ENCODE measurements at regions of chr12 and their contacts with region 1.

Region 1: DNA sequence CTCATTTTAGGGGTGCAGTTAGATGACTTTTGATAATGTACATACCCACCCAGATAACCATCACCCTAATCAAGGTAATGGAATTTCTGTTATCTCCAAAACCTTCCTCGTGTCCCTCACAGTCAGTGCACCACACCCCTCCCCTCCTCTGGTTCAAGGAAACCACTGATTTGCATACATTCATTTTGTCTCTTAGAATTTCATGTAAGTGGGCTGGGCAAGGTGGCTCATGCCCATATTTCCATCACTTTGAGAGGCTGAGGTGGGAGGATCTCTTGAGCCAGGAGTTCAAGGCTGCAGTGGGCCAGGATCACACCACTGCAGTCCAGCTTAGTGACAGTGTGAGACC is 15.7 kb downstream of the ADIPOR2 start:
- DNase-seq: no peak
- ATAC-seq: no peak
- H3K4me3 Mint-ChIP-seq: no peak overlapping the region
- H3K27ac Mint-ChIP-seq: no peak overlapping the region
- H3K4me1 Mint-ChIP-seq: peaks cover 58% of the 10 kb centered on the region
- H3K27me3 Mint-ChIP-seq: no peaks in the 10 kb centered on the region
- CTCF ChIP-seq: no peak

Region 2: GRCh38 chr12:1740161-1740948 is 33.7 kb after region 1 on chr12:
- CTCF ChIA-PET with region 1: no interaction called
- POLR2A ChIA-PET with region 1: no interaction called
- intact Hi-C with region 1: loop called (anchors 5 kb)
- DNase-seq: no peak
- ATAC-seq: no peak
- H3K4me3 Mint-ChIP-seq: no peak overlapping the region
- H3K27ac Mint-ChIP-seq: no peak overlapping the region
- H3K4me1 Mint-ChIP-seq: peaks cover 57% of the 10 kb centered on the region
- H3K27me3 Mint-ChIP-seq: no peaks in the 10 kb centered on the region
- CTCF ChIP-seq: no peak

Measured in activated B cell treated with CpG ODN at 0.5 μM for 24 hours (primary cell).